Uterus (tissue), 4 donors: ENCODE measurements at regions of chr14 and their contacts with region 1.

Region 1: GRCh38 chr14:22314181-22314820 is 274.7 kb downstream of the DAD1 start:
- DNase-seq: peak in 1 of 2 donors; percentile 15
- H3K4me3 ChIP-seq: no peak overlapping the region
- H3K27ac ChIP-seq: no peak overlapping the region
- H3K4me1 ChIP-seq: no peaks in the 10 kb centered on the region
- H3K27me3 ChIP-seq: no peaks in the 10 kb centered on the region
- CTCF ChIP-seq: peak; percentile 42 to 49 (median 44)
- POLR2A ChIP-seq: no peak

Region 2: DNA sequence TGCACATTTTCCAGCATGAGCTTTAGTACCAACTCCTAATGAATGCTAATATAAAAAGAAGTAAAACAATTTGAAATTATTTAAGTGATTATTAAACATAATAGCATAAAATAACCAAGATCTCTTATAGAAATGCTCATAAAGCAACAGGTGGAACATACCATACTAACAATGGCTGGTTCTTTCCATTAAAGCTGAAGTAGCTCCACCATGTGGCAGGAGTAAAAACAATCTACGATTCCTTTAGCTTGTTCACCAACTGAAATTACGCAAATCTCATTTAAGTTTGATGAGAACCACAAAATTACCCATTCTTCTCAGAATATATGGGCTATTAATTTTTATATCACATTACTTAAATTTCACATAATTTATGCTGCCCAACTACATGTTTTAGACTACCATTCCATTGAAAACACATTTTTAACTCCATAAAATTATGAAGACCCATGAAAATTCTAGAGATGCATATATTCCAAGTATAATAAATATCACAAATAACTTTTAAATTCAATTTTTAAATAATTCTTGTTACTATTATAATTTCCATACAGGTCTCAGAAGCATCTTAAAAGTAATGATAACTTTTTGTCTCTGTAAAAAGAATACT is 61.1 kb after region 1 on chr14:
- intact Hi-C with region 1: loop called (anchors 10 kb)
- DNase-seq: no peak
- H3K4me3 ChIP-seq: no peak overlapping the region
- H3K27ac ChIP-seq: no peak overlapping the region
- H3K4me1 ChIP-seq: no peaks in the 10 kb centered on the region
- H3K27me3 ChIP-seq: peaks cover 0 to 3% of the 10 kb centered on the region in 2 donors
- CTCF ChIP-seq: peak; percentile 39 to 65 (median 46)
- POLR2A ChIP-seq: no peak

Region 3: GRCh38 chr14:23195550-23196101 is 881.3 kb after region 1 on chr14:
- intact Hi-C with region 1: no loop called
- DNase-seq: no peak
- H3K4me3 ChIP-seq: no peak overlapping the region
- H3K27ac ChIP-seq: no peak overlapping the region
- H3K4me1 ChIP-seq: no peaks in the 10 kb centered on the region
- H3K27me3 ChIP-seq: no peaks in the 10 kb centered on the region
- CTCF ChIP-seq: no peak
- POLR2A ChIP-seq: no peak